Activated CD4-positive, alpha-beta memory T cell treated with anti-CD3 and anti-CD28 coated beads for 36 hours (primary cell): ENCODE measurements at regions of chr17 and their contacts with region 1.

Region 1: DNA sequence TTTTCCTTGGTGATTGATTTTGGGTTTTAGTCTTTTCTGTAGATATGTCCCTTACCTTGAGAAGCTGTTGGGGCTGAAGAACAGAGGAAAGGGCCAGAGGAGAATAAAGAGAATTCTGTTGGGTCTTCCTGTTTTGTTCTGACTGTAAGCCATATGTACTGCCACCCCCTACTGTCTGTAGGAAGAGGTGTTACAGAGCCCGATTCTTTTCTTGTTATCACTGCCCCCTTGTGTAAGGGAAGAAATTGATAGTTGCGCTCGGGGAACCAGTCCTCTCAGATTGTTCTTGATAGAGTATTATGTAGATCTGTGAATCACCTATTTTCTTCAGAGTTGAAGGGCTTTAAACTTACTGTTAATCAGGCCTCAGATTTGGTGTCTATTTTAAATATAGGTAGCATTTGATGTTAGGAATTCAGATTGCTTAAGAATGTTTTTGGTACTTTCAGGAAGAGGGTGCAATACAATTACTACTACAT is 2.4 kb downstream of the TANC2 start:
- DNase-seq: peak; percentile 58
- H3K4me3 Mint-ChIP-seq: no peak overlapping the region
- H3K27ac Mint-ChIP-seq: no peak overlapping the region
- H3K4me1 Mint-ChIP-seq: peaks cover 28% of the 10 kb centered on the region
- H3K27me3 Mint-ChIP-seq: peaks cover 18% of the 10 kb centered on the region

Region 2: GRCh38 chr17:62703775-62704378 is 264.6 kb before region 1 on chr17:
- CTCF ChIA-PET with region 1: interaction called, 4 read pairs
- POLR2A ChIA-PET with region 1: no interaction called
- intact Hi-C with region 1: loop called (anchors 1 kb)
- DNase-seq: peak; percentile 79
- H3K4me3 Mint-ChIP-seq: peak overlapping the region; percentile 20
- H3K27ac Mint-ChIP-seq: no peak overlapping the region
- H3K4me1 Mint-ChIP-seq: peaks cover 10% of the 10 kb centered on the region
- H3K27me3 Mint-ChIP-seq: peaks cover 23% of the 10 kb centered on the region

Region 3: DNA sequence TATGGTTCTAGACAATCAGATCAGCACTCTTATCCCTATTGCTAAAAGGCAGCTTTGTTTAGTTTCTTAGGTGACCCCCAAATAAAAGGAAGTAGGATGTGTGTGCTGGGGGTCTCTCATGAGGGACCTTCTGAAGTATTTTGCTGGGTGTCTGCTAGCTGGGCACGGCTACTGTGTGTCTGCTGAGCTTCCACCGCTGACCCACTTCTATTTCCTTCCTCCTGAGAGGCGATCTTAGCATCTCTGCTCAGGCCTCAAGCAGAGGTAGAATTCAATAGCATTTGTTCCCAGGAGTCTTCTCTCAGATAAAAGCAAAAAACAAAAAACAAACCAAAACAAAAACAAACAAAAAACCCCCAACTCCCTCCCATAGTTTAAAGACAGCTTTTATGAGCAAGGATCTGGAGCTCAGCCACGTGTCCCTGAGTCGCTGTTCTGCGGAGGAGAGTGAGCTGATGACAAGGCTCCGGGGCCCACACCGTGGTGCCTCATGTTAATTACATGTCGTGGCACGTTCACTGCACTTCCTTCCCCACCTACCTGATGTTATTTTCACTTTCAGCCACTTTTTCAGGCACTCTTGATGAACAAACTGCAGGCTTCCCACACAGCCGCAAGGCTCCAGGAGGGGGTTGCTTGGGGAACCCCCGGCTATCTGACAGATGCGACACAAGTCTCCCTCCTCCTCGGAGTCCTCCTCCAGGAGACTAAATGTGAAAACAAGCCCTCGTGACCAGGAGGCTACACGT is 243.9 kb before region 1 on chr17:
- CTCF ChIA-PET with region 1: interaction called, 8 read pairs
- POLR2A ChIA-PET with region 1: interaction called, 4 read pairs
- intact Hi-C with region 1: loop called (anchors 1 kb)
- DNase-seq: peak; percentile 92
- H3K4me3 Mint-ChIP-seq: peak overlapping the region; percentile 24
- H3K27ac Mint-ChIP-seq: peak overlapping the region; percentile 8
- H3K4me1 Mint-ChIP-seq: peaks cover 21% of the 10 kb centered on the region
- H3K27me3 Mint-ChIP-seq: peaks cover 52% of the 10 kb centered on the region

Region 4: DNA sequence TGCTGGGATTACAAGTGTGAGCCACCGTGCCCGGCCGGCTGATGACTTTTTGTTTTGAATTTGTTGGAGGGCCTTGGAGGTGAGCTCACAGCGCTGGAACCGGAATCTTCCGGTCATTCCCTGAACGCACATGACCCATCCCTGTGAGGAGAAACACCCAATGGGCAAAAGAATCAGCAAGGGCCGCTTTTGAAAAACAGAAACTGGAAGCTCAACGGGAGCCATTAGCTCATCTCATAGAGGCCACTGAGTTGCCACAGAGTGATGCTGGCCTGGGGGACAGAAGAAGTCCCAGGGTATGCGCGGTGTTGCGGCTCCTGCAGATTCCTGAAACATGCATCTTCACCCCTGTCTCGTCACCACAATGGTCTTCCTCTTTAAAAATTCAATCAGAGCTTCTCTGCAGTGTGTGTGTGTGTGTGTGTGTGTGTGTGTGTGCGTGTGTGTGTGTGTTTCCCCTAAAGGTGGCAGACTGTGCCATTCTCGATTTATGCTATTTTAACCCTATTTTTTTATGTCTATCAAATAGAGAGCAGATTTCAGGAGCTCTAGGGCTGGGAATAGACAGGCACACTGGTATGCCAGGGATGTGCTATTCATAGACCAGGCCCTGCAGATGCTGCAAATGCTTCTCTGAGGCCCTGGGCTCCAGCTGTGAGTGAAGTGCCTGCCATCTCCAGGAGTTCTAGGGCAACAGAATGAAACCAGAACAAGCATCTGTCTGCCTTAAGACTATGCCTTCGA is 228.7 kb before region 1 on chr17:
- CTCF ChIA-PET with region 1: interaction called, 4 read pairs
- POLR2A ChIA-PET with region 1: no interaction called
- intact Hi-C with region 1: loop called (anchors 1 kb)
- DNase-seq: no peak
- H3K4me3 Mint-ChIP-seq: no peak overlapping the region
- H3K27ac Mint-ChIP-seq: no peak overlapping the region
- H3K4me1 Mint-ChIP-seq: peaks cover 21% of the 10 kb centered on the region
- H3K27me3 Mint-ChIP-seq: peaks cover 32% of the 10 kb centered on the region

Region 5: GRCh38 chr17:62870030-62870541 is 98.4 kb before region 1 on chr17:
- CTCF ChIA-PET with region 1: no interaction called
- POLR2A ChIA-PET with region 1: no interaction called
- intact Hi-C with region 1: no loop called
- DNase-seq: no peak
- H3K4me3 Mint-ChIP-seq: no peak overlapping the region
- H3K27ac Mint-ChIP-seq: no peak overlapping the region
- H3K4me1 Mint-ChIP-seq: no peaks in the 10 kb centered on the region
- H3K27me3 Mint-ChIP-seq: peaks cover 9% of the 10 kb centered on the region

Region 6: GRCh38 chr17:62892870-62893338 is 75.6 kb before region 1 on chr17:
- CTCF ChIA-PET with region 1: no interaction called
- POLR2A ChIA-PET with region 1: no interaction called
- intact Hi-C with region 1: loop called (anchors 5 kb)
- DNase-seq: peak; percentile 54
- H3K4me3 Mint-ChIP-seq: no peak overlapping the region
- H3K27ac Mint-ChIP-seq: no peak overlapping the region
- H3K4me1 Mint-ChIP-seq: peaks cover 9% of the 10 kb centered on the region
- H3K27me3 Mint-ChIP-seq: peaks cover 9% of the 10 kb centered on the region

Region 7: DNA sequence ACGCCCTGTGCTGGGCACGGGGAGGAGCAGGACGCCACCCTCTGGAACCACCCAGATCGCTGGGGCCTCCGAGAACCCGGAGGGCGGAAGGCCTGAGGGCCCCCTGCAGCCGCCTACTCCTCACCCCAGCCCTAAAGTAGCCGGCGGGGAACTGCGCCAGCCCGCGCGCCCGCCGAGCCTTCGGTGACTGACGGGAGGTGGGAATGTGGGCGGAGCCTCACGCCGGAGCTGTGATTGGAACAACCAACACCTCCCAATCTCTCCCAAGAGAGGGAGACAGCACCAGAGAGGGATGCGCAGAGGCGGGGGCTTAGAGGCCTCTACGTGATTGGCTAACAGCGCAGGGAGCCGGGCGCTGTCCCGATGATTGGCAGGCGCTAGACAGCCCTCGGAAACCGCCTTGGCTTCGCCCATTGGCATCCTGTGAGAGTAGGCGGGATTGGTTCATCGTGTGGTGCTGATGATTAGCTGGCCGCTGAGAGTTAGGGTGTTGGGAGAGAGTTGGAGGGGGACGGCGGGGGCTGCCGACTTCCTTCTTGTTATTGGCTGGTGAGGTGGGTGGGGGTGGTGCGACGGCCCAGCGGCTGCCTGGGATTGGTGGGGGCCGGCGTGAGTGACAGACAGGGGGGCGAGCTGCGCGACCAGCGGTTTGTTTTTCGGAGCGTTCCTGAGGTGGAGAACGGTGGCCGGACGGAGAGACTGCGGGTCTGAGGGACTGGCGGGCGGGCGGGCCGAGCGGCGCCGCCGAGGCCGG is 653.5 kb after region 1 on chr17 and contains the start of gene MAP3K3:
- CTCF ChIA-PET with region 1: no interaction called
- POLR2A ChIA-PET with region 1: no interaction called
- intact Hi-C with region 1: loop called (anchors 10 kb)
- DNase-seq: peak; percentile 99
- H3K4me3 Mint-ChIP-seq: peak within 1 kb of the TSS; percentile 99
- H3K27ac Mint-ChIP-seq: peak within 1 kb of the TSS; percentile 87
- H3K4me1 Mint-ChIP-seq: peaks cover 38% of the 10 kb centered on the region
- H3K27me3 Mint-ChIP-seq: no peaks in the 10 kb centered on the region
- total RNA-seq, gene MAP3K3: 32.8 to 34.0 TPM